Posterior vena cava (tissue), 2 donors: ENCODE measurements at regions of chr13 and their contacts with region 1.

Region 1: GRCh38 chr13:26946684-26947343 is 186.2 kb upstream of the GPR12 start:
- DNase-seq: no peak

Region 2: GRCh38 chr13:26785838-26786630 is 160.8 kb before region 1 on chr13:
- intact Hi-C with region 1: no loop called
- DNase-seq: no peak

Region 3: GRCh38 chr13:27977476-27978300 is 1030.9 kb after region 1 on chr13:
- intact Hi-C with region 1: loop called in 1 of 2 experiments (anchors 10 kb)
- DNase-seq: no peak